PC-9 (cell line): ENCODE measurements at regions of chr5 and their contacts with region 1.

Region 1: GRCh38 chr5:57383093-57383861 is 99.3 kb downstream of the ACTBL2 start:
- DNase-seq: peak; percentile 62 to 89
- H3K4me3 ChIP-seq: no peak overlapping the region; the same call in 1 of the 2 replicates
- H3K27ac ChIP-seq: peak overlapping the region; percentile 84
- H3K4me1 ChIP-seq: peaks cover 30% of the 10 kb centered on the region
- H3K27me3 ChIP-seq: no peaks in the 10 kb centered on the region
- CTCF ChIP-seq: no peak

Region 2: GRCh38 chr5:57338068-57338892 is 45.0 kb before region 1 on chr5:
- CTCF ChIA-PET with region 1: no interaction called
- POLR2A ChIA-PET with region 1: no interaction called
- intact Hi-C with region 1: loop called (anchors 5 kb)
- DNase-seq: peak; percentile 31 to 72
- H3K4me3 ChIP-seq: no peak overlapping the region
- H3K27ac ChIP-seq: peak overlapping the region; percentile 67
- H3K4me1 ChIP-seq: peaks cover 37% of the 10 kb centered on the region
- H3K27me3 ChIP-seq: no peaks in the 10 kb centered on the region
- CTCF ChIP-seq: peak; percentile 50

Region 3: DNA sequence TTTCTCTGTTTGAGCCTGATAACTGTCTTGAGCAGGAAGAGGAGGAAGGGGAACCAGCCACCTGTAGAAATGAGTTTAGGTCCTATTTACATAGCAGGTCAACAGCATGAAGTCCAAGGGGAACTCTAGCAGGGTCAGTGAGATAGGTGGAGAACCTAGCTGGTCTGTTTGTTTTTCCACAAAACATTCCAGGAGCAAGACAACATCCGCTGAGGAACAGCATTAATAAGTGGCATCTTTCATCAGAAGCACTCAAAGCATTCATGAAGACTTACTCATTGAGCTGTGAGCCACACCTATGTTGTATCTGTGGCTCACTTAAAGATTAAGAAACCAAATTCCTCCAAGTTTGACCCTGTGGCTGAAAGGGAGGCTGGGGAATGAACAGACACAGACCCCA is 16.5 kb before region 1 on chr5:
- CTCF ChIA-PET with region 1: no interaction called
- POLR2A ChIA-PET with region 1: no interaction called
- intact Hi-C with region 1: loop called (anchors 2 kb)
- DNase-seq: peak; percentile 55 to 98
- H3K4me3 ChIP-seq: no peak overlapping the region
- H3K27ac ChIP-seq: peak overlapping the region; percentile 92
- H3K4me1 ChIP-seq: peaks cover 58% of the 10 kb centered on the region
- H3K27me3 ChIP-seq: no peaks in the 10 kb centered on the region
- CTCF ChIP-seq: no peak

Region 4: GRCh38 chr5:57435701-57436134 is 52.4 kb after region 1 on chr5:
- CTCF ChIA-PET with region 1: no interaction called
- POLR2A ChIA-PET with region 1: no interaction called
- intact Hi-C with region 1: loop called (anchors 5 kb)
- DNase-seq: peak; percentile 58 to 99
- H3K4me3 ChIP-seq: no peak overlapping the region
- H3K27ac ChIP-seq: peak overlapping the region; percentile 99
- H3K4me1 ChIP-seq: peaks cover 42% of the 10 kb centered on the region
- H3K27me3 ChIP-seq: no peaks in the 10 kb centered on the region
- CTCF ChIP-seq: no peak

Region 5: DNA sequence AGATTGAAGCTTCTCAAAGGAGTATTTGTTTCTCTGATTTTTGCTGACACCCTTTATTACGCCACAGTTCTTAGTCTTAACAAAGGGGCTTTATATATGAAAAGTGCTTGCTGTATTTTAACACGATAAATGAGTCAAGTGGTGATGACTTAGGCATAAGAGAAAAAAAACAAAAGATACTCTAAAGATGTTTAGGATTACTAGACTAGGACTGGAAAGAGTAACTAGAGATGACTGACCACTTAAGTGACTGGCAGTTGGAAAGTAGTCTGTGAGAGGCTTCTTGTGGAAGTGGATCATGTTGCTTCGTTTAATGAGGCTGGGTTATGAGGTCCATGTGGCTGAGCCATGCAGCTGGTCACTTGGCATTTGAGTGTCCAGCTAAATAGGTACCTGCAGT is 168.8 kb after region 1 on chr5:
- CTCF ChIA-PET with region 1: no interaction called
- POLR2A ChIA-PET with region 1: no interaction called
- intact Hi-C with region 1: no loop called
- DNase-seq: no peak
- H3K4me3 ChIP-seq: no peak overlapping the region
- H3K27ac ChIP-seq: no peak overlapping the region
- H3K4me1 ChIP-seq: no peaks in the 10 kb centered on the region
- H3K27me3 ChIP-seq: no peaks in the 10 kb centered on the region
- CTCF ChIP-seq: no peak